Activated CD8-positive, alpha-beta T cell treated with anti-CD3 and anti-CD28 coated beads, Interleukin-2, amount 10 ng/mL, durations not matched to agents 7 days and 5 days (primary cell): ENCODE measurements at regions of chr2 and their contacts with region 1.

Region 1: DNA sequence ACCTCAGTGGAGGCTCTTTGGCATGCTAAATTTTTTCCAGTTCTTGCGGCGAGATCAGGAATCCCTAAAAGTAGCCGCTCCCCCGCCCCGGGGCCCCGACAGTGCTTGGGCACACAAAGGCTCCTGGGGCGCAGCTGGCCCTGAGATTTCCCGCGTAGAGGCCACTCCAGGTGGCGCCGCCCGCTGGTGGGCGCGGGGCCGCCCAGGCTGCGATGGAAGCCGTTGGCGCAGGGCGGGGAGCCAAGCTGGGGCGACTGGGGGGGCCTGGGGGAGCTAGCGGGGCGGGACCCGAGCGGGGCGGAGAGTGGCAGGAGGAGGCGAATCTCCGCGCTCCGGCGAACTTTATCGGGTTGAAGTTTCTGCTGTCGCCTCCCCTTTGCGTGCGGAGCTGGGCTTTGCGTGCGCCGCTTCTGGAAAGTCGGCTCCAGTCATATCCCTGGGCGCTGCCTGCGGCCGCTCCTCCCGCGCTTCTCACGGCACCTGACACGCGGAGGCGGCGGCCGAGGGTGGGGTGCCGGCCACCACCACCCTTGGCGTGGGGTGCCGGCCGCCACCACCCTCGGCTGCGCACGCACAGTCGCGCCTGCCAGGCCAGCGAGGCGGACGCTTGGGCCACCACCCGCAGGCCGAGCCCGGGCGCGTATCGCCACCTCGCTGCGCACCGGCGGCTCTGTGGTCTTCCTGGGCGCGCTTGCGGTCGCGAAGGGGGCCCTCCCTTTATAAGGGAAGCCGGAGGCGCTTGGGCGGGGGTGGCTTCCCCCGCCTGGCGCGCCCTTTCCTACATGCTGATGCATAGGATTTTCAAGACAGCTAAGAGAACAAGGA is 867 bp upstream of the CYP1B1 start:
- DNase-seq: peak; percentile 80
- ATAC-seq: peak; percentile 80
- H3K4me3 Mint-ChIP-seq: peak overlapping the region; percentile 75
- H3K27ac Mint-ChIP-seq: peak overlapping the region; percentile 70
- H3K4me1 Mint-ChIP-seq: peaks cover 34% of the 10 kb centered on the region
- H3K27me3 Mint-ChIP-seq: peaks cover 49% of the 10 kb centered on the region

Region 2: GRCh38 chr2:37982147-37982582 is 94.7 kb before region 1 on chr2:
- CTCF ChIA-PET with region 1: no interaction called
- POLR2A ChIA-PET with region 1: no interaction called
- DNase-seq: peak; percentile 69
- ATAC-seq: no peak
- H3K4me3 Mint-ChIP-seq: no peak overlapping the region
- H3K27ac Mint-ChIP-seq: no peak overlapping the region
- H3K4me1 Mint-ChIP-seq: peaks cover 6% of the 10 kb centered on the region
- H3K27me3 Mint-ChIP-seq: peaks cover 7% of the 10 kb centered on the region

Region 3: DNA sequence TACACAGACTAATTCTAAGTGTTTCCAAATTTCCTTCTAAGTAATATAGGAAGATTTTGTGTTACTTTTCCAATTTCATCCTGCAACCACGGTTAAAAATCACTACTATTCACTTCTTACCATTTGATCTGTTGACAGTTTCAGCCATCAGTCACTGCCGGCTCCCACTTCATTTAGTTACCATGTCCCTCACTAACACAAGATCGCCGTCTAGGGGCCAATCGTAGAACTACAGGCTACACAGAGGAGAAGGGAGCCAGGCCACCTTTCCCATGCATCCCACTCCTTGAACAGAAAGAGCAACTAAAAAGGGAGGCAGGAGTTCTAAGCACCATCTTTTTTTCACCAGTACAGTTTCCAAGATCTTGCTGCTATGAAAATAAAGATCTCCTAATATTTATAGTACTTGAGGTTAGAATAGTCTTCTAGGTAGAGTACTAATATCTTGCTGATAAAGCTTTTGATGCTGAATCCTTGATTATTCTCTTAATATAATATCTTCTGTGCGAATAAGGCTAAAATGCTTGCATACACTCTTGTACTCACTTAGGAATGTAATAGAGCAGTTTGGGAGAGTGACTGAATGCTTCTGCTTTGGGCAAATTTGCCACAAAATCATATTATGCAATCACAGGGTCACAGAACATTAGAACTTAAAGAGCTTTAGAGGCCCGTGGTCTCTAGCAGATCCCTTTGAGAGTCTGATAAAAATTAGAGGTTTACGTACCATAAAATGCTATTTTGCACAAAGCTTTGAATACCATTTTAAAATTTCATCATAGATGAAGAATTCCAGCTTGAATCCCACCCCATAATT is 38.6 kb after region 1 on chr2:
- CTCF ChIA-PET with region 1: interaction called, 11 read pairs
- POLR2A ChIA-PET with region 1: no interaction called
- DNase-seq: peak; percentile 81
- ATAC-seq: peak; percentile 78
- H3K4me3 Mint-ChIP-seq: no peak overlapping the region
- H3K27ac Mint-ChIP-seq: no peak overlapping the region
- H3K4me1 Mint-ChIP-seq: peaks cover 3% of the 10 kb centered on the region
- H3K27me3 Mint-ChIP-seq: peaks cover 11% of the 10 kb centered on the region

Region 4: GRCh38 chr2:38129987-38130386 is 53.2 kb after region 1 on chr2:
- CTCF ChIA-PET with region 1: no interaction called
- POLR2A ChIA-PET with region 1: no interaction called
- DNase-seq: no peak
- ATAC-seq: no peak
- H3K4me3 Mint-ChIP-seq: no peak overlapping the region
- H3K27ac Mint-ChIP-seq: no peak overlapping the region
- H3K4me1 Mint-ChIP-seq: peaks cover 3% of the 10 kb centered on the region
- H3K27me3 Mint-ChIP-seq: no peaks in the 10 kb centered on the region

Region 5: GRCh38 chr2:38274286-38275276 is 197.8 kb after region 1 on chr2:
- CTCF ChIA-PET with region 1: interaction called, 12 read pairs
- POLR2A ChIA-PET with region 1: no interaction called
- DNase-seq: peak; percentile 55
- ATAC-seq: peak; percentile 42
- H3K4me3 Mint-ChIP-seq: no peak overlapping the region
- H3K27ac Mint-ChIP-seq: no peak overlapping the region
- H3K4me1 Mint-ChIP-seq: peaks cover 2% of the 10 kb centered on the region
- H3K27me3 Mint-ChIP-seq: peaks cover 2% of the 10 kb centered on the region